ENCODE measurements at regions of chr3 and their contacts with region 1.

Region 1: GRCh38 chr3:50121416-50122032 is 32.8 kb downstream of the RBM5 start:
- DNase-seq: peak; percentile 75 to 90 (median 84)
- H3K4me3 ChIP-seq: no peak overlapping the region
- H3K27ac ChIP-seq: no peak overlapping the region
- H3K4me1 ChIP-seq: peaks cover 0 to 6% (median 2%) of the 10 kb centered on the region in 4 experiments
- H3K27me3 ChIP-seq: no peaks in the 10 kb centered on the region

Region 2: DNA sequence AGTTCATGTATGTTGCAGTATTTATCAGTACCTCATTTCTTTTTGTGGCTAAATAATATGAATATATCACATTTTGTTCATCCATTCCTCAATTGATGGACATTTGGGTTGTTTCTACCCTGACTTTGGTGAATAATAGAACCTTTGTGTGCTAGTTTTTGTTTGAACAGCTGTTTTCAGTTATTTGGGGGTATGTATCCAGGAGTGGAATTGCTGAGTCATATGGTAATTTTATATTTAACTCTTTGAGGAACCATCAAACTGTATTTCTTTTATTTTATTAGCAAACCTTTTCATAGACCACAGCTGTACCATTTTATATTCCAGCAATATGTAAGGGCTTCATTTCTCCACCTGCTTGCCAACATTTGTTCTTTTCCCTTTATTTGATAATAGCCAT is 71.2 kb before region 1 on chr3:
- CTCF ChIA-PET with region 1: no interaction called
- POLR2A ChIA-PET with region 1: no interaction called
- DNase-seq: peak in 2 of 3 donors; percentile 64 to 74
- H3K4me3 ChIP-seq: no peak overlapping the region
- H3K27ac ChIP-seq: no peak overlapping the region
- H3K4me1 ChIP-seq: peaks cover 3 to 10% (median 6%) of the 10 kb centered on the region in 4 experiments
- H3K27me3 ChIP-seq: no peaks in the 10 kb centered on the region

Region 3: DNA sequence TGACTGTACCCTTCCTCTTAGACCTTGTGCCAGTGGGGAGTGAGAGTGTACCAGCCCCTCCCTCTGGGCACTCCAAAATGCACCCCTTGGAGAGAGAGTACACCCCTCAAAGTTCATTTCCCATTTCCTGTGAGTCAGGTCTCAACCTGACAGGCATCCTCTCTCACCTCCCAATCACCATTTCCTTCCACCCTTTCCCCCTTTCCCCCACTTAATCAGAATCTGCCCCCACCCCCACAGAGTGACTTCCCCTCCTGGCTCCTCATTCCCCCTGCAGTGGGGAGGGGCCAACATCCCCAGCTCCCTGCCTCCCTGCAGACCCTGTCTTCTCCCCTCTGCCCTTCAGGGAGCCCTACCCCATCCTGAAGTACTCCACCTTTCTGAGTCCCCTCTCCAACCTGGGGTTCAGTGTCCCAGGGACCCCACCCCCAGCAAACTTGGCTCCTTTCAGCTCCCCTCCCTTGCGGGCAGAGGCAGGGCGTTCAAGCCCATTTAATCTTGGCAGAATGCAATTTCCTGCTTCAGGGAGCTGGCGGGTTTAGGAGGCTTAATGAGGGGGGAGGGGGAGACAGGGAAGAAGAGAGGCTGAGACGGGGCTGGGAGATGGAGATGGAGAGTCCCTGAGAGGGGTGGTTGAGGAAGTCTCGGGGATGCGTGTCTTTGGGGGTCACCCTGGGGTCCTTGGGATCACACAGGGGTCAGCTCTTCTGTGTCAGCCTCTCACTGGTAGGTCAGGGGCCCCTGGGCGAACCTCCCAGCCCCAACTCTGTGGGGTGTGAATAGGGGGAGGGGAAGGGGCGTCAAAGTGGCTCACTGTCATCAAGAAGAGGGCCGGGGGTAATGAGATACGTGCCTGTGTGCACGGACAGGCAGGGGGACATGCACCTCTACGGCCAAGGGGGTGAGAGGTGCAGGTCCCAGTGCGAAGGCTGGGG is 17.0 kb after region 1 on chr3:
- CTCF ChIA-PET with region 1: interaction called, 108 read pairs
- POLR2A ChIA-PET with region 1: no interaction called
- DNase-seq: peak in 2 of 3 donors; percentile 31 to 35
- H3K4me3 ChIP-seq: peak overlapping the region in 1 of 7 experiments; percentile 34
- H3K27ac ChIP-seq: no peak overlapping the region
- H3K4me1 ChIP-seq: peaks cover 0 to 29% (median 20%) of the 10 kb centered on the region in 4 experiments
- H3K27me3 ChIP-seq: peaks cover 0 to 2% (median 0%) of the 10 kb centered on the region in 5 experiments

Region 4: DNA sequence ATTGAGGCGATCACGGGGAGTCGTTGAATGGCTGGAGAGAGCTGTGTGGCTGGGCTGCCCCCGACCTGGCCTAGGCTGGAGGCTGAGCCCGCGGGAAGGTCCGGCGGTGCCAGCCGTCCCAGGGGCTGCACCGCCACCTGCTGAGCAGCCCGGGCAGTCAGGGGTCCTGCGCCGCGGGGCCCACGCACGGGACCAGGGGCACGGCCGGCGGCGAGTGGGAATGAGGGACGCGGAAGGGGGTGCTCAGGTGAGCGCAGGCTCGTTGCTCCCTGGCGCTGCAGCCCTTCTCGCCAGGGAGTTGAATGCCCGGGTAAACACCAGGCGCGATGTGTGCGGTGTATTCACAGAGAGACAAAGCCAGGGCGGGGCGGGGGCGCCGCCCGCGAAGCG is 32.9 kb after region 1 on chr3:
- CTCF ChIA-PET with region 1: interaction called, 32 read pairs
- POLR2A ChIA-PET with region 1: interaction called, 3 read pairs
- DNase-seq: no peak
- H3K4me3 ChIP-seq: peak overlapping the region; percentile 24 to 76 (median 59)
- H3K27ac ChIP-seq: no peak overlapping the region
- H3K4me1 ChIP-seq: peaks cover 0 to 29% (median 22%) of the 10 kb centered on the region in 4 experiments
- H3K27me3 ChIP-seq: peaks cover 0 to 45% (median 24%) of the 10 kb centered on the region in 5 experiments

Region 5: DNA sequence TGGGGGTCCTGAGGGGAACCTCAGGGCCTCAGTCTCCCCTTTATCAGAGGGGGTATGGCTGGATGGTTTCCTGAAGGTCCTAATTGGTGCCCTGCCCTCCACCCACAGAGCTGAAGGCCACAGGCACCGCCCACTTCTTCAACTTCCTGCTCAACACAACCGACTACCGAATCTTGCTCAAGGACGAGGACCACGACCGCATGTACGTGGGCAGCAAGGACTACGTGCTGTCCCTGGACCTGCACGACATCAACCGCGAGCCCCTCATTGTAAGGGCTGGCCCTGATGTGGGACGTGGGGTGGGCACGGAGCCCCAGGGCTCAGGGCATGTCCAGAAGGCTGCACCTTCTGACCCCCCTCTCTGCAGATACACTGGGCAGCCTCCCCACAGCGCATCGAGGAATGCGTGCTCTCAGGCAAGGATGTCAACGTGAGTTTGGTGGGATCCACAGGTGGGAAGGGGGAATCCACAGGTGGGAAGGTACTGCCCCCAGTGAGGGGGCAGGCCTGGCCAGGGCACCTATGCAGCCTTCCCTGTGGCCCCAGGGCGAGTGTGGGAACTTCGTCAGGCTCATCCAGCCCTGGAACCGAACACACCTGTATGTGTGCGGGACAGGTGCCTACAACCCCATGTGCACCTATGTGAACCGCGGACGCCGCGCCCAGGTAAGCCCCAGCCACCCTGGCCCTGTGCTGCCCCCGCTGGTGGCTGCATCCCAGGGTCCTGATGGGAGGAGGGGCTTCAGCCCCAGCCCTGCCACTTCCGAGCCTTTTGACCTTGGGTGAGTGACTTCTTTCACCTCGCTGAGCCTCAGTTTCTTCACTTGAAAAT is 52.4 kb after region 1 on chr3:
- CTCF ChIA-PET with region 1: interaction called, 194 read pairs
- POLR2A ChIA-PET with region 1: no interaction called
- DNase-seq: peak in 1 of 3 donors; percentile 34
- H3K4me3 ChIP-seq: no peak overlapping the region
- H3K27ac ChIP-seq: no peak overlapping the region
- H3K4me1 ChIP-seq: peaks cover 0 to 8% (median 2%) of the 10 kb centered on the region in 4 experiments
- H3K27me3 ChIP-seq: no peaks in the 10 kb centered on the region

Region 6: DNA sequence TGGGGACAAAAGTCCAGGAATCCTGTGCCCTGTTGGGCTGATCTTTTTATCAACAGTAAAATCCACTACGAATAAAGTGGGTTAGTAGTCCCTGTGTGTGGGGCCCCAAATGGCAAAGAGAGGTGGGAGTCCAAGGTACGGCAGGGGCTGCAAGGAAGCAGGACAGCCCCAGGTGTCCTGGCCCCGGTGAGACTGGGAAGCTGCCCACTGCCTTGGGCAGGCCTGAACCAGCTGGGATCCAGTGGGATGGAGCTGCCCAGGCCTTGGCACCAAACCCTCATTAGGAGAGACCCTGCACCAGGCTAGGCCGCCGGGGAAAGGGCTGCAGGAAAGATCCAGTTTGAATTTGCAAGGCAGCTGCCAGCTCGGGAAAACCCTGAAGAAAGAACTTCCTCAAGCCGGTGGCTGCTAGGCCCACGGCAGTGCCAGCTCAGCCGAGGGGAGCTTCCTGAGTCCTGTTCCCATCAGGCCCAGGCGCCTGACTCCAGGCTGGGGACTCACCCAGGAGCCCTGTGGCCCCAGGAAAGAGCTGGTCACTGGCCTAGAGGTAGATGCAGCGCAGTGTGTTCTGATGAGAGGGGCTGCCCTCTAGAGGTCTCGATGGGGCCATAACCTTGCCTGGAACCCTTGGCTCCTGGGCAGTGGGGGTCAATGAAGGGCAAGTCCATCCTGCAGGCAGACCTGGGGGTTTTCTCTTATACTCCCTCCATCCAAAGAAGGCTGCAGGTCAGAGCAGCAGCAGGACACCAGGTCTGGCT is 100.1 kb after region 1 on chr3:
- CTCF ChIA-PET with region 1: interaction called, 12 read pairs
- POLR2A ChIA-PET with region 1: no interaction called
- DNase-seq: no peak
- H3K4me3 ChIP-seq: no peak overlapping the region
- H3K27ac ChIP-seq: no peak overlapping the region
- H3K4me1 ChIP-seq: peaks cover 0 to 20% (median 15%) of the 10 kb centered on the region in 4 experiments
- H3K27me3 ChIP-seq: peaks cover 0 to 4% (median 0%) of the 10 kb centered on the region in 5 experiments

Region 7: GRCh38 chr3:50227390-50228183 is 106.1 kb after region 1 on chr3:
- CTCF ChIA-PET with region 1: interaction called, 12 read pairs
- POLR2A ChIA-PET with region 1: no interaction called
- DNase-seq: peak; percentile 84 to 88 (median 88)
- H3K4me3 ChIP-seq: peak overlapping the region; percentile 43 to 88 (median 81)
- H3K27ac ChIP-seq: peak overlapping the region; percentile 25 to 71
- H3K4me1 ChIP-seq: peaks cover 0 to 45% (median 34%) of the 10 kb centered on the region in 4 experiments
- H3K27me3 ChIP-seq: peaks cover 0 to 4% (median 0%) of the 10 kb centered on the region in 5 experiments

Measured in common myeloid progenitor, CD34-positive (primary cell).